ENCODE measurements at regions of chr11 and their contacts with region 1.

Region 1: DNA sequence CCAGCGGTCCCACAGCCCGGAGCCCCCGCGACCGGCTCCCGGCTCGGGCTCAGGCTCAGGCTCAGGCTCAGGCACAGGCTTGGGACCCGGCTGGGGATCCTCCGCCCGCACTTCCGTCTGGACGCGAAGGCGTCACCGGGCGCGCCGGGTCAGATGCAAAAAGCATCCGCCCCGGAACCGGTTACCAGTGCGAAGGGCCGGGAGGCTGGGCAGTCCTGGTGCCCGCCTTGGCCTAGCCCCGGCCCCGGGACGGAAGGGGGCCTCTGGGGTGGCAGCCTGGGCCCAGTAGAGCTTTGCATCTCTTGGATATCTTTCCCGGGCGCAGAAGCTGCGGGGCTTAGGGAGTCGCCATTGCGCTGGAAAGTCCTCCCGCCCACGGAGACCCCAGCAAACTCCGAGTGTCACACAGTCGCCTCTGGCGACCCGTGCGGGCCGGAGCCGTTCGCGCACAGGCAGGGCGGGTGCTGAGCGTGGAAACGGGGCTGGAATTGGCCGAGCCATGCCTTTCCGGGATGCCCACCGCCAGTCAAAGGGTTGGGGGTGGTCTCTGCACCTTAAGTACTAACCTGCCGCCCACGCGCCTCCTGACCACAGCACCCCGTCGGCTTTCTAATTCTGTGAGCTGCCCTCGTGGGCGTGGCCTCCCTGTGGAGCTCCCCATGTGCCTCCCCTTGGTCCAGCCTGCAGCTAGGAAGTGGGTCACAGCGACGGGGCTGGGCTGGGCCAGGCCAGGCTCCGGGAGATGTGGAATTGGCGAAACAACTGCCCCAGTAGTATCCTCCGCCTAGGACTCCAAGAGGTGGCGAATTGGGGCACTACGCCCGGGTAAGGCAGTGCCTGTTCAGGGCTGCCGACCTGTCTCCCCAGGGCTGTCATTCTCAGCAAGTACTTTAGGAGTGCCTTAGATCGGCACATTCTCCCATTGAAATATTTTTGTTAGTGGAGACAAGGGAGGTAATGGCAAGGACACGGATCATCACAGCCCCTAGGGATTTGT is at the start of gene TMEM9B:
- DNase-seq: peak; percentile 93
- H3K4me3 ChIP-seq: peak within 1 kb of the TSS; percentile 74
- H3K27ac ChIP-seq: peak within 1 kb of the TSS; percentile 98
- H3K4me1 ChIP-seq: peaks cover 8% of the 10 kb centered on the region
- H3K27me3 ChIP-seq: no peaks in the 10 kb centered on the region
- CTCF ChIP-seq: no peak
- total RNA-seq, gene TMEM9B: 55.3 to 69.3 TPM

Region 2: DNA sequence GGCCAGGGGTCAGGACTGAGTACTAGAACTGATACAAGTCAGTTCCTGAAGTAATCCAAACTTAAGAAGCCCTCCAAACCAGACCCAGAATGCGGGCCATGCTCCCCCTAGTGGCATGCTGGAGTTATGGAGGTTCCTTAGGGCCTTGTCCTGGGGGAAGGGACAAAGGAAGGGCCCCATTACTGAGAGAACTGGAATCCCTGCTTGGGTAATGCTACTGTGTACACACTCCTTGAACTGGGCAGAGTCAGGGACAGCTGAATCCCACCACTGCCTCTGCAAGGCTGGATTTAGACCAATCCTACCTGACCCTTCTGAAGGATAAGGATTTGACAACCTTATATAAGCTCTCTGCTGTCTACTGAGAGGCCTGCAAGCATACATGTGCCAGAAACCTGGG is 151.0 kb before region 1 on chr11:
- intact Hi-C with region 1: loop called (anchors 10 kb)
- DNase-seq: peak; percentile 83
- H3K4me3 ChIP-seq: no peak overlapping the region
- H3K27ac ChIP-seq: peak overlapping the region; percentile 68
- H3K4me1 ChIP-seq: peaks cover 8% of the 10 kb centered on the region
- H3K27me3 ChIP-seq: no peaks in the 10 kb centered on the region
- CTCF ChIP-seq: peak; percentile 81

Region 3: GRCh38 chr11:8911029-8911826 is 53.4 kb before region 1 on chr11 and contains the start of gene AKIP1:
- intact Hi-C with region 1: loop called (anchors 5 kb)
- DNase-seq: peak; percentile 96
- H3K4me3 ChIP-seq: peak within 1 kb of the TSS; percentile 99
- H3K27ac ChIP-seq: peak within 1 kb of the TSS; percentile 89
- H3K4me1 ChIP-seq: peaks cover 4% of the 10 kb centered on the region
- H3K27me3 ChIP-seq: no peaks in the 10 kb centered on the region
- CTCF ChIP-seq: no peak
- total RNA-seq, gene AKIP1: 16.7 to 22.3 TPM

Region 4: GRCh38 chr11:9060700-9061111 is 96.1 kb after region 1 on chr11:
- intact Hi-C with region 1: no loop called
- DNase-seq: no peak
- H3K4me3 ChIP-seq: no peak overlapping the region
- H3K27ac ChIP-seq: no peak overlapping the region
- H3K4me1 ChIP-seq: no peaks in the 10 kb centered on the region
- H3K27me3 ChIP-seq: no peaks in the 10 kb centered on the region
- CTCF ChIP-seq: peak; percentile 15

Measured in colonic mucosa (tissue), 4 donors.